ENCODE measurements at regions of chr16 and their contacts with region 1.

Region 1: GRCh38 chr16:66934153-66934838 is at the start of gene CIAO2B:
- DNase-seq: peak; percentile 82
- H3K4me3 Mint-ChIP-seq: peak within 1 kb of the TSS; percentile 97
- H3K27ac Mint-ChIP-seq: peak within 1 kb of the TSS; percentile 94
- H3K4me1 Mint-ChIP-seq: peaks cover 31% of the 10 kb centered on the region
- H3K27me3 Mint-ChIP-seq: no peaks in the 10 kb centered on the region
- CTCF ChIP-seq: no peak
- total RNA-seq, gene CIAO2B: 133 and 159 TPM in 2 replicates

Region 2: DNA sequence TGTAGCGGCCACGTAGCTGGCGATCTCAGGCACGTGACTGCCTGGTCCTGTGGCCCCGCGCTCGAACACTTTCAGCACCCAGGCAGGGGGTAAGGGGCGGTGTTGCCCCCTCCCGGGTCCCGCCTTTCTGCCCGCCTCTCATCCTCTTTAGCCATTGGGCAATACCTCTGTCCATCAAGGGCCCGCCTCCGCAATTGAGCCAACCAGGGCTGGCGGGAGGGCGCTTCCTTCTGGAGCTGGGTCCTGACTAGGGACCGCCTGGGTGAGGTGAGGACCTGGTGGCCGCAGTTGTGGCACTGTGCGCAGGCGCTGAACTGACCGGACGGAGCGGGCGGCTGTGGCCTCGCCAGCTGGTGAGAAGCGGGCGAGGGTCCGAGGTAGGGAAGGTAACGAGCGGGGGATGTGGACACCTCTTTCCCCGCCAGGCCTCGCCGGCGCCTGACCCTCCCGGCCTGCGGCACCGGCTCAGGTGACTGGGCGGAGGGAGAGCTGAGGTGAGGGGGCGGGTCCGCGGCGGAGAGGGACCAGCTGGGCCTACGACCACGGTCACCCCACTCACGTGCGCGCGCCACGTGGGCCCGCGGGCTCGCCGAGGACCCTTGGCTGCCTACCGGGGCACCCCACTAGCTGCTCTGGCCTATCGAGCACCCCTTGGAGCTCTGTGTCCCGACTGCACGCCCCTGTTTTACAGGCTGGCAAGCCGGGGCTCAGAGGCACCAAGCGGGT is 53.8 kb before region 1 on chr16 and contains the start of gene PDP2:
- CTCF ChIA-PET with region 1: no interaction called
- POLR2A ChIA-PET with region 1: interaction called, 16 read pairs
- intact Hi-C with region 1: no loop called
- DNase-seq: peak; percentile 96
- H3K4me3 Mint-ChIP-seq: peak within 1 kb of the TSS; percentile 96
- H3K27ac Mint-ChIP-seq: peak within 1 kb of the TSS; percentile 90
- H3K4me1 Mint-ChIP-seq: peaks cover 11% of the 10 kb centered on the region
- H3K27me3 Mint-ChIP-seq: no peaks in the 10 kb centered on the region
- CTCF ChIP-seq: no peak
- total RNA-seq, gene PDP2: 21.5 and 22.8 TPM in 2 replicates

Region 3: GRCh38 chr16:67055712-67056487 is 121.6 kb after region 1 on chr16:
- CTCF ChIA-PET with region 1: no interaction called
- POLR2A ChIA-PET with region 1: no interaction called
- intact Hi-C with region 1: no loop called
- DNase-seq: peak; percentile 81
- H3K4me3 Mint-ChIP-seq: peak overlapping the region; percentile 11
- H3K27ac Mint-ChIP-seq: peak overlapping the region; percentile 81
- H3K4me1 Mint-ChIP-seq: peaks cover 11% of the 10 kb centered on the region
- H3K27me3 Mint-ChIP-seq: no peaks in the 10 kb centered on the region
- CTCF ChIP-seq: no peak

Measured in MCF 10A (cell line).